ENCODE measurements at regions of chr2 and their contacts with region 1.

Region 1: DNA sequence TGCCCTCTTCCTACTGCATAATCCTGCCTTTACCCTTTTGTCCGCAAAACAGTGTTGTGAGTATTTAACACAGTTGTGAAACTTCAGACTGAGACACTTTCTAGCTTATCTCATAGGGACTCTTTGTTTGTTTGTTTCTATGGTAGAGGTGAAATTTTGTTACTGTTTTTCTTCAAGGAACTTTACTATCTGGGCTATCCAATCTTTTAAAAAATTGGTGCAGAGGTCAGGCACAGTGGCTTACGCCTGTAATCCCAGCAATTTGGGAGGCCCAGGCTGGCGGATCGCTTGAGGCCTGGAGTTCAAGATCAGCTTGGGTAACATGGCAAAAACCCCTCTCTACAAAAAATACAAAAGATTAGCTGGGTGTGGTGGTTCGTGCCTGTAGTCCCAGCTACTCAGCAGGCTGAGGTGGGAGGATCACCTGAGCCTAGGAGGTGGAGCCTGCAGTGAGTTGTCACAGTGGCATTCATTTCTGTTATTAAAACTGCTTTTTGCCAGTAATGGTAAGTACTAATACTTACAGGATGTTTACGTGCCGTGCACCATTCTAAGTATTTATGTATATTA is 18.8 kb downstream of the GMCL1 start:
- DNase-seq: no peak

Region 2: GRCh38 chr2:68824831-68825230 is 1023.5 kb before region 1 on chr2:
- intact Hi-C with region 1: no loop called
- DNase-seq: no peak

Region 3: DNA sequence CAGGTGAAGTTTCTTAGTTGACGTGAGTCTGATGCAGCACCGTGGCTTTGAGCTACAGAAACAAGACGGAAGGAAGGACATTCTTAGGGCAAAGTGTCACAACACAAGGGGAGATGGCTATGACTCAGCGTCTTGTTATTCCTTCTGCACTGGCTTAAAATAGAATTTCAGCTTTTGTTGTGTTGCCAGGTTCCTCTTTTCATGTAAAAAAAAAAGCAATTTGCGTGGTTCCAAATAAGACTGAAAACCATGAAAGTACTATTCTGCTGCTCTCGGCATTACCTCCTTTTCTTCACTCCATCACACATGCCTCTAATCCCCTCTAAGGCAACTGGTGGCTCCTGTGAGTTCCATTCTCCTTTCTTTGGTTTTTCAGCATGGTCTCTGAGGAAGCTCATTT is 685.2 kb before region 1 on chr2:
- intact Hi-C with region 1: no loop called
- DNase-seq: no peak

Region 4: DNA sequence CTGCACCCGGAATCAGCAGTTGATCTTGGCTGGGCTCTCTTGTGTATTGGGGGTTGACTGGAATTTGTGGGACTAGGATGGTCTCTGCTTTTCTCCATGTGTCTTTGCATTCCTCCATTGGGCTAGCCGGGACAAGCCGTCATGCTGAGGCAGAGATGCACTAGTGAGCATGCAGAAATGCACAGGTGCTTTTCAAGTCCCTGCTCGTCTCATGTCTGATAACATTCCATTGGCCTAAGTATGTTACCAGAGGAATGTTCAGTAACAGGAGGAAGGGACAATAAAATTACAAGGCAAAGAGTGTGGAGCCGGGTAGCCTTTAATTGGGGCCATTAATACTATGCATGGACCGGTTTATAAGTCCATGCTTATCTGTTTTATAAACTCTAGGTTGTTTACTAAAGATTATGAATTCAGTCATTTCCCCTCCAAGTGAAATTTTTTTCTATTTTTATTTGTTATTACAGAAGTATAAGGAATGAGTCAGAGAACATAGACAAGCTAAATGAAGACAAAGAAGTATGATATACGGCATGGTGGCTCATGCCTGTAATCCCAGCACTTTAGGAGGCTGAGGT is 180.4 kb before region 1 on chr2:
- intact Hi-C with region 1: no loop called
- DNase-seq: no peak

Region 5: DNA sequence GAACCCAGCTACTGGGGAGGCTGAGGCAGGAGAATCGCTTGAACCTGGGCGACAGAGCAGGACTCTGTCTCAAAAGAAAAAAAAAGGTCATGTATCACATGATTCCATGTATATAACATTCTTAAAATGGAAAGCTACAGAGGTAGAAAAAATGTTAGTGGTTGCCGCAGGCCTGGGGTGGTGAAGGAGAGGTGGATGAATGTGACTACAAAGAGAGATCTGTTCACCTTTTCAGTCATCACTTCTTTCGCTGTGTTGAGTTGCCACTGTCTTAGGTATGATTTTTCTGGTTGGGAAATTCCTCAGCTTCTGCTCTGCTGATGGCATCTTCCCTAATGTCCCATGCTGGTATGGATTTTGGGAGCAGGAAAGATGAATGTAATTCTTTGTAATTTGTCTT is 40.2 kb after region 1 on chr2:
- intact Hi-C with region 1: loop called (anchors 5 kb)
- DNase-seq: no peak

Region 6: DNA sequence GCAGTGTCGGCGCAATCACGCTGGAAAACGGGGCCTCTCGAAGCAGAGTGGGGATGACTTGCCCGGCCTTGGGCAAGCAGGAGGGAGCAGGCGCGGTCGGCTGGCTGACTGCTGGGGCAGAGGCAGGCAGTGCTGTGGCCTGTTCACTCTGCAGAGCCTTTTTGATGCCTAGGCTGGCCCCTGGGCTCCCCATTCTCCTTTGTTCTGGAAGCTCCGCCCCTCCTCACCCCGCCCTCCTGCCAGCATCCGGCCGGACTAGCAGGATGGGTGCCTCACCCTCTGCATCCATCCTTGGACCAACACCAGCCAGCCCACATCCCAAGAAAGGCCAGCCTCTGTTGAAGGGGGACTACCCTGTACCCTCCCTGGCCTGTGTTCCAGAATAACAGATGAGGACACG is 113.2 kb after region 1 on chr2 and contains the start of gene ASPRV1:
- intact Hi-C with region 1: no loop called
- DNase-seq: peak; percentile 52 to 98 (median 82)